ENCODE measurements at regions of chr11 and their contacts with region 1.

Region 1: DNA sequence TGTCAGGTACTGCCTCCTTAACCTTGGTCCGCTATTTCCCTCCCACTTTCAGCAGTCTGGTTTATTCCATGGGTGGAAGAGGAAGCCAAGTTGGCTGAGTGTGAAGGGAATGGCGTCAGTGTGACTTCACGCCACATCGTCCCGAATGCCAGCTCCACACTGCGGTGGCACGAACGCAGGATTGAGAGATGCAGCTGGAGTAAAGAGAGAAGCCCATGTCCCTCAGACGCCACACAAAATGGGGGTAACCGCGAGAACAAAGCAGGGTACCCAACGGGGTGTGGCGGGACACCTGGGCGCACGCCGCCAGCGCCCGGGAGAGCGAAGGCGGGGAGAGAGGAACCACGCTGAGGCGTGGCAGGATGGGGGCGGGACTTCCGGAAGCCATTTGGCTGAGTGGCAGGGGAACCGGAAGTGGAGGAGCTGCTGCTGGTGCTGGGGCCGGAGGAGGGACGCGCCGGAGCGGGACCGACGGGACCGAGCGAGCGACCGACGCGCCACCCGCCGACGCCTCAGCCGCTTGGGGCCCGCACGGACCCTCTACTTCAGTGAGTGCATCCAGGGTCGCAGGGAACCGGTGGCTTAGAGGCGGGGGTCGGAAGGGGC is at the start of gene PAFAH1B2:
- DNase-seq: peak; percentile 93
- H3K4me3 Mint-ChIP-seq: peak within 1 kb of the TSS; percentile 97
- H3K27ac Mint-ChIP-seq: peak within 1 kb of the TSS; percentile 90
- H3K4me1 Mint-ChIP-seq: peaks cover 29% of the 10 kb centered on the region
- H3K27me3 Mint-ChIP-seq: peaks cover 8% of the 10 kb centered on the region
- total RNA-seq, gene PAFAH1B2: 71.8 and 83.6 TPM in 2 replicates

Region 2: GRCh38 chr11:116829525-116830183 is 314.3 kb before region 1 on chr11 and contains the start of gene APOC3:
- intact Hi-C with region 1: no loop called
- DNase-seq: no peak
- H3K4me3 Mint-ChIP-seq: no peak within 1 kb of the TSS
- H3K27ac Mint-ChIP-seq: no peak within 1 kb of the TSS
- H3K4me1 Mint-ChIP-seq: peaks cover under 1% of the 10 kb centered on the region
- H3K27me3 Mint-ChIP-seq: peaks cover 7% of the 10 kb centered on the region
- total RNA-seq, gene APOC3: not detected in 2 replicates

Region 3: GRCh38 chr11:117178210-117179034 is 34.4 kb after region 1 on chr11 and contains the start of gene SIDT2:
- intact Hi-C with region 1: loop called (anchors 1 kb)
- DNase-seq: peak; percentile 89
- H3K4me3 Mint-ChIP-seq: peak within 1 kb of the TSS; percentile 95
- H3K27ac Mint-ChIP-seq: peak within 1 kb of the TSS; percentile 86
- H3K4me1 Mint-ChIP-seq: peaks cover 33% of the 10 kb centered on the region
- H3K27me3 Mint-ChIP-seq: no peaks in the 10 kb centered on the region
- total RNA-seq, gene SIDT2: 24.3 and 32.2 TPM in 2 replicates